Activated CD4-positive, alpha-beta T cell treated with anti-CD3 and anti-CD28 coated beads for 36 hours (primary cell): ENCODE measurements at regions of chrX and their contacts with region 1.

Region 1: DNA sequence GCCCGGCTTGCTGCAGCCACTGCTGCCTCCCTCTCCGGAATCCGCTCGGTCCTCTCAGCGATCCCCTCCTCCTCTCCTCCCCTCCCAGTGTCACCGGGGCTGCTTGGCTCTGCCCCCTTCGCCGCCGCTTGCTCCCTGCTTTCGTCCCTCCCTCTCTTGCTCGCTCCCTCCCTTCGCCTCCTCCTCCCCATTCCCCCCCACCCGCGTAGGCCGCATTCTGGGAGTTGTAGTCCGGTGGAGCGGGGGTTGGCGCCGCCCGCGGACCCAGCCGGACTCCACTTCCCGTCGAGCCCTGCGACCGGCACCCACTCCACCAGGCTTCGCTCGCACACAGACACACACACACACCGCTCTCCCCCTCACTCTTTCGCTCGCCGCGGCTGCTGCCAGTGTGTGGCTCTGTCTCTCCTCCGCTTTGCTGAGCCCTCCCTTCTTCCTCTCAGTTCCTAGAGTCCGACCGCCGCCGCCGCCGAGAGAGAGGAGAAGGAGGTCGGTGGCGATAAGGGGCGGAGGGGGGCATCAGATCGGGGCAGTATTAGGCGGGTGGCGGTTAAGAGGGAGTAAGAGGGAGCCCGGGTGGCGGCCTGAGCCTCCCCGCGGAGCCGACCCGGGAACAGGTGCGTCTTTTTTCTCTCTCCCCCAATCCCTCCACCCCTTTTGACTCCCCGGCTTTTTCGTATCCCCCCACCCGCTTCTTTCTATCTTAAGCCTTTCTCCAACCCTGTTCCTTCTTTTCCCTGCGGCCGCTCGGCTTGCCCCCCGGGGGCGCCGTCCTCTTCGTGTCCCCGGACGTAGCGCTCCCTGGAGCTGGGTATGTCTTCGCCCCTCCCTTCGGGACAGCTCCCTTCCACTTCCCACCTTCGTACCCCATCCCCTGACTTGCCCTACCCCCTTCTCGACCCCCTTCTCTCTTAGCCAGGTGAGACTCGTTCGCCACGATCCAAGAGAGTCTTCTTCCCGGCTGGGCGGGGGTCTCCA is at the start of gene BCORL1:
- DNase-seq: peak; percentile 93
- ATAC-seq: peak; percentile 94
- H3K4me3 Mint-ChIP-seq: no peak within 1 kb of the TSS
- H3K27ac Mint-ChIP-seq: peak within 1 kb of the TSS; percentile 51
- H3K4me1 Mint-ChIP-seq: peaks cover 11% of the 10 kb centered on the region
- H3K27me3 Mint-ChIP-seq: no peaks in the 10 kb centered on the region
- total RNA-seq, gene BCORL1: 8.3 to 8.5 TPM

Region 2: GRCh38 chrX:129781134-129781672 is 201.4 kb before region 1 on chrX:
- CTCF ChIA-PET with region 1: no interaction called
- POLR2A ChIA-PET with region 1: no interaction called
- intact Hi-C with region 1: loop called in 1 of 2 experiments (anchors 5 kb)
- DNase-seq: peak; percentile 91
- ATAC-seq: peak; percentile 80
- H3K4me3 Mint-ChIP-seq: peak overlapping the region; percentile 79
- H3K27ac Mint-ChIP-seq: peak overlapping the region; percentile 97
- H3K4me1 Mint-ChIP-seq: peaks cover 50% of the 10 kb centered on the region
- H3K27me3 Mint-ChIP-seq: no peaks in the 10 kb centered on the region

Region 3: GRCh38 chrX:129905787-129906580 is 76.6 kb before region 1 on chrX and contains the start of gene UTP14A:
- CTCF ChIA-PET with region 1: no interaction called
- POLR2A ChIA-PET with region 1: no interaction called
- intact Hi-C with region 1: loop called in 1 of 2 experiments (anchors 1 kb)
- DNase-seq: peak; percentile 90
- ATAC-seq: peak; percentile 97
- H3K4me3 Mint-ChIP-seq: peak within 1 kb of the TSS; percentile 88
- H3K27ac Mint-ChIP-seq: peak within 1 kb of the TSS; percentile 92
- H3K4me1 Mint-ChIP-seq: peaks cover 25% of the 10 kb centered on the region
- H3K27me3 Mint-ChIP-seq: no peaks in the 10 kb centered on the region
- total RNA-seq, gene UTP14A: 35.7 to 45.2 TPM

Region 4: DNA sequence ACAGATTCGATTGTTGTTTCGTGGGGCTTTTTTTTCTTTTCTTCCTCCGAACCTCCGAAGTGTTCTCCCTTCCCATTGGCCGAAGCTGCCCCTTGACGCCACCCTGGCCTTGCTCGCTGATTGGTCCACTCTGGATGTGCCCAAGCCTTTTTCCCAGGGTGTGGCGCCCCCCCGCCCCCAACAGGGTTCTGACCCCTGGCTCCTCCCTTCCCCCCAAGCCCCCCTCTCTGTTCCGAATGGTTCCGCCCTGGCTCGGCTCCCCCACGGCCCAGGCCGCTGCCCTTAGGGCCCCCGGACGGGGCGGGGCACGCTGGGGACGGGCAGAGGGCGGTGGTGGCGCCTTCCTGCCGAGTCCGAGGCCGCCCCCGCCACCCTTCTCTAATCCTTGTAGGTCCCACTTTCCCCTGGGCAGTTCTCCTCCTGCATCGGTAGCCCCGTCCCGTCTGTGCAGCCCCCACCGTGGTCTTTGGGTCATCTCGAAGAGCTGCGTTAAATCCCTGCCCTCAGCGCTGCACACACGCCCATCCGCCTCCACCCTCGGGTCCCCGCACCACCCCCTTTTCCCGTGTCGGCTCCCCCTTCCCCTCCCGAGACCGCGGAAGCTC is 51.0 kb before region 1 on chrX:
- CTCF ChIA-PET with region 1: interaction called, 6 read pairs
- POLR2A ChIA-PET with region 1: no interaction called
- intact Hi-C with region 1: loop called in 1 of 2 experiments (anchors 1 kb)
- DNase-seq: peak; percentile 75
- ATAC-seq: peak; percentile 78
- H3K4me3 Mint-ChIP-seq: peak overlapping the region; percentile 62
- H3K27ac Mint-ChIP-seq: peak overlapping the region; percentile 73
- H3K4me1 Mint-ChIP-seq: peaks cover 4% of the 10 kb centered on the region
- H3K27me3 Mint-ChIP-seq: peaks cover 2% of the 10 kb centered on the region

Region 5: DNA sequence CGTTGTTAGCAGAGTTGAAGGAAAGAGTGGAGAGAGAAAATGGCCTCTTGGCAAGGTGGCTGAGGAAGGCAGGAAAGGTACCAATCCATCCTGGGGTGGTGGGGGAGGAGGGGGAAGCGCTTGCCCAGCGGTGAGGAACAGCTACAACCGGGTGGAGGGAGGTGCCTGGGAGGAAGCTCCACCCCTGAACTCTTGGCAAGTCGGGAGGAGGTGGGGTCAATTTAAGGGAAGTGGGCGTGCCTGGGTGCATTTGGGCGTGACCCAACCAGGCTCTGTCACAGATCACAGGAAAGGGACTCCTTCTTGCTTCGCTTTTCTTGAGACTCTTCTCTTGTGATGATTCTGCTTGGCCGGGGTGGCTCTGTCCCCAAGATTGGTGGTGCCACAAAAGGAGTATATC is 41.6 kb after region 1 on chrX:
- CTCF ChIA-PET with region 1: no interaction called
- POLR2A ChIA-PET with region 1: no interaction called
- intact Hi-C with region 1: loop called in 1 of 2 experiments (anchors 1 kb)
- DNase-seq: peak; percentile 83
- ATAC-seq: peak; percentile 100
- H3K4me3 Mint-ChIP-seq: no peak overlapping the region
- H3K27ac Mint-ChIP-seq: peak overlapping the region; percentile 61
- H3K4me1 Mint-ChIP-seq: peaks cover 8% of the 10 kb centered on the region
- H3K27me3 Mint-ChIP-seq: no peaks in the 10 kb centered on the region

Region 6: DNA sequence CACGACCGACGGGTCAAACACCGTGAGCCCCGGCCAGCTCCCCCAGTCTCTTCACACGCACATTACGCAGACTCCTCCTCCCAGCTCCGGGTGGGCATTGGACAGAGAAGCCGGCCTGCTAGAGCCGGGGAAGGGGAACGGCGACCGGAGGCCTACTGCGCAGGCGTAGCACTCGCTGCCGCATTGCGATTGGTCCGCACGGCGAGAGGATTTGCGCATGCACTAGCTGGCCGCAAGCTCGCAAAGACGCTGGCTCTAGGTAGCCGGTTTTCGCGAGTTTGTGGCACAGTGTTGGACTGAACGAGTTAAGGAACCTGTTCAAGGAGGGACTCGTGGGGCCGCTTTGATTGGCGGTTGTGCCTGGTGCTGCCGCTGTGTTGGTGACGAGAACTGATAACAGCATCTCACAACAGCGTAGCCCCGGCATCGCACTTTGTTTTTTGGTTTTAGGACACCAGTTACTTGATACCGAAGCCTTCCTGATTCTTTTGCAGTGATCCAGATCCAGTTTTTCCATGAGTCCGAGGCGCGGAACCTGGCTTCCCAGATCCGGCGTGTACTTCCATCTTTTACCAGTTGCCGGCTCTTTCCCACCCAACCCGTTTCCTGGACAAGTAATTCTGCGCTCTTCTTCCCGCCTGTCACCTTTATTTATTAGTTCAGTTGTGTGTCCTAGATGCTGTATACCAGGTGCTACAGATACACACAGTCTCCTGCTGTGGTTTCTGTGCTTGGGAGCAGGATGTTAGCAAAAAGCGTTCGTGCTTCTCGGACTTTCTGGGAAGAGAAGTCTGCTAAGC is 183.3 kb after region 1 on chrX and contains the start of gene AIFM1:
- CTCF ChIA-PET with region 1: no interaction called
- POLR2A ChIA-PET with region 1: no interaction called
- intact Hi-C with region 1: loop called in 1 of 2 experiments (anchors 2 kb)
- DNase-seq: peak; percentile 92
- ATAC-seq: peak; percentile 95
- H3K4me3 Mint-ChIP-seq: peak within 1 kb of the TSS; percentile 86
- H3K27ac Mint-ChIP-seq: peak within 1 kb of the TSS; percentile 89
- H3K4me1 Mint-ChIP-seq: peaks cover 37% of the 10 kb centered on the region
- H3K27me3 Mint-ChIP-seq: no peaks in the 10 kb centered on the region
- total RNA-seq, gene AIFM1: 48.8 to 61.7 TPM

Region 7: GRCh38 chrX:130339408-130340222 is 357.1 kb after region 1 on chrX and contains the start of gene SLC25A14:
- CTCF ChIA-PET with region 1: no interaction called
- POLR2A ChIA-PET with region 1: no interaction called
- intact Hi-C with region 1: loop called in 1 of 2 experiments (anchors 5 kb)
- DNase-seq: peak; percentile 82
- ATAC-seq: peak; percentile 88
- H3K4me3 Mint-ChIP-seq: peak within 1 kb of the TSS; percentile 87
- H3K27ac Mint-ChIP-seq: peak within 1 kb of the TSS; percentile 94
- H3K4me1 Mint-ChIP-seq: peaks cover 14% of the 10 kb centered on the region
- H3K27me3 Mint-ChIP-seq: no peaks in the 10 kb centered on the region
- total RNA-seq, gene SLC25A14: 9.6 to 11.0 TPM